Left ventricle myocardium superior (tissue), 1 donor: ENCODE measurements at regions of chr1 and their contacts with region 1.

Region 1: GRCh38 chr1:183227963-183228649 is 42.0 kb downstream of the LAMC2 start:
- DNase-seq: peak; percentile 52
- ATAC-seq: peak; percentile 77

Region 2: GRCh38 chr1:182720463-182720862 is 507.6 kb before region 1 on chr1:
- intact Hi-C with region 1: no loop called
- DNase-seq: no peak
- ATAC-seq: no peak

Region 3: DNA sequence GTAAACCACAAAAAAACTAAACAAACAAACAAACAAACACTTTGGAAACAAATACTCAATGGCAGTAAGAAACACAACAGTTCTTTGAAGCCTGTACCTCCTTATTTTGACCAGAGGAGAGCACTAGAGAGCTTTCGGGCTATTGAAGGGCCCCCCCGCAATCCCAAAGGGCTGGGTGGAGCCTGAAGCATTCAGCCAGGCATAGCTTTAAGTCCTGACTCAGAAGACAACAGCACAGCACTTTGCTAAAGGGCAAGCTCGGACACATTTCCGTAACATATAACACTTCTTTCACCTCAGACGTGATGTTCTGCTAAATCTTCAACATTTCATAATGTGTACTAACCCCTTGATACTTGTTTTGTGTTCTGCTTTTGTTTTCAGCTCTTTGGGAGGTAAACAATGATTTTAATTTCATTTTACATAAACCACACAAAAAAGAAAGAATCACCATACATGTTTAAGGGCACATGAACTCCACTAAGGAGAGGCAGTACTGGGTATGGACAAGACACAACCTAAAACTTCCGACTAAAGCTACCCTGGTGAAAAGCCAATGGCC is 265.5 kb before region 1 on chr1:
- intact Hi-C with region 1: loop called (anchors 10 kb)
- DNase-seq: peak; percentile 85
- ATAC-seq: peak; percentile 100

Region 4: DNA sequence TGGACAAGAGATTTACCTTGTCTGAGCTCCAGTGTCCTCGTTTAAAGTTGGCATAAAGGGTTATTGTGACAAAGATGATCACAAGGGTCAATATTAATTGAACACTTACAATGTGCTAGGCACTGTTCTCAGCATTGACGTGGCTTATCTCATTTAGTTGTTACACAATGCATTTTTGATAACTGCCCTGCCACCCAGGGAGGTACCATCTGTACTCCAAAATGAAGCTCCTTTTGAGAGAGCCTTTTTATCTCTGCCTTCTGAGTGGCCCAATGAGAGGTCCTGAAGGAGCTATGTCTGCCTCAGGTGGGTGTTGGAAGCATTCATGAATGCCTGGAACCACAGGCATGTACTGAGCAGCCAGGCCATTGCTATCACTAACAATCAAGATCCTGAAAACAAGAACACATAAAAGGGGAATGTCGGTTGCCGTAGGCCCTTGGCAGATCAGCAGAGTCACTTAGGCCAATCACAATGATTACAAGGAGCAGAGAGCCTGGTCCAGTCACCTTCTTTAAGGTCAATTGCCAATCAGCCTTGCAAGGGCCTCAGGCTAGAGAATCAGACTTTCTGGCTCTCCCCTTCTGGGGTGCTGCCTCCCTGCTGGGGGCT is 111.6 kb after region 1 on chr1:
- intact Hi-C with region 1: no loop called
- DNase-seq: no peak
- ATAC-seq: peak; percentile 43